Tibial artery (tissue), 4 donors: ENCODE measurements at regions of chr15 and their contacts with region 1.

Region 1: GRCh38 chr15:31215490-31216214 is 111.0 kb upstream of the KLF13 start:
- DNase-seq: peak; percentile 77 to 93
- H3K4me3 ChIP-seq: peak overlapping the region; percentile 52 to 62
- H3K27ac ChIP-seq: peak overlapping the region; percentile 80 to 91
- H3K4me1 ChIP-seq: peaks cover 0 to 27% (median 21%) of the 10 kb centered on the region in 4 donors
- H3K27me3 ChIP-seq: no peaks in the 10 kb centered on the region
- CTCF ChIP-seq: peak; percentile 73 to 84

Region 2: DNA sequence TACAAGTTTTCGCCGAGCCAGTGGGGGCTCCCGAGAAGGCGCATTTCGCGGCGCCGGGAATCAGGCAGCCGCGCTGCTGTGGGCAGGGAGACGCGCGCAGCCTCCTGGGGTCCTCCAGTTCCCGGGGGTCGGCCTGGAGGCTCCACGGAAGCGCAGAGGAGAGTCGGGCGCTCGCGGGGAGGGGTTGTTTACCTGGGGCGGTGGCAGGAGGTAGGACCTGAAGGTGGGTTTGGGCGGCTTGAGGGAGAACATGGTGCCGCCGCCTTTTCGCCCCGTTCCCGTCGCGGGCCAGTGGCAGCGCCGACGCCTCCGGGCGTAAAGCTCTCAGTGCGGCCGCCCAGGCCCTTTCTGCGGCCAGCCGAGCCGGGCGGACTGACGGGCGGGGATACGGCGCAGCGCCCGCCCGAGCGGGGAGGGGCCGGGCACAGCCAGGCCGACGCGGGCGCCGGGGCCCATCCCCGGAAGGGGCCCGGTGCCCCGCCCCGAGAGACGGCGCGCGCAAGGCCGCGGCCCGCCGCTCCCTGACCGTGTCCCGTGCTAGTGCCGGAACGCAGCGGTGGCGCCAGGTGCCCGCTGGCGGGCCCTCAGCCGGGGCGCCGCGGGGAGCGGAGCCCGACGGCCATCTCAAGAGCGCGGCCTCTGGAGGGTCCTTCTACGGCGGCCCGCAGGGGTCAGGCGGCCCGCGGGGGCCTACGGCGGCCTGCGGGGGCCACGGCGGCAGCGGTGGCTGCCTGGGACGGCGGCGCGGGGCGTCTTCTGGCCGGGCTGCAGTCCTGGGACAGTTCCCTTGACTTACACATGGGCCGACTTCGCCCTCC is 224.2 kb before region 1 on chr15 and contains the start of gene MTMR10:
- intact Hi-C with region 1: loop called (anchors 10 kb)
- DNase-seq: peak; percentile 47 to 85
- H3K4me3 ChIP-seq: peak within 1 kb of the TSS; percentile 100
- H3K27ac ChIP-seq: peak within 1 kb of the TSS; percentile 97
- H3K4me1 ChIP-seq: peaks cover 0 to 28% (median 16%) of the 10 kb centered on the region in 4 donors
- H3K27me3 ChIP-seq: no peaks in the 10 kb centered on the region
- CTCF ChIP-seq: no peak

Region 3: GRCh38 chr15:31236184-31237042 is 20.8 kb after region 1 on chr15:
- intact Hi-C with region 1: loop called (anchors 2 kb)
- DNase-seq: peak; percentile 78 to 90
- H3K4me3 ChIP-seq: peak overlapping the region; percentile 27 to 32
- H3K27ac ChIP-seq: peak overlapping the region; percentile 69 to 79
- H3K4me1 ChIP-seq: peaks cover 2 to 19% (median 18%) of the 10 kb centered on the region in 4 donors
- H3K27me3 ChIP-seq: no peaks in the 10 kb centered on the region
- CTCF ChIP-seq: peak in 1 of 2 experiments; percentile 25

Region 4: DNA sequence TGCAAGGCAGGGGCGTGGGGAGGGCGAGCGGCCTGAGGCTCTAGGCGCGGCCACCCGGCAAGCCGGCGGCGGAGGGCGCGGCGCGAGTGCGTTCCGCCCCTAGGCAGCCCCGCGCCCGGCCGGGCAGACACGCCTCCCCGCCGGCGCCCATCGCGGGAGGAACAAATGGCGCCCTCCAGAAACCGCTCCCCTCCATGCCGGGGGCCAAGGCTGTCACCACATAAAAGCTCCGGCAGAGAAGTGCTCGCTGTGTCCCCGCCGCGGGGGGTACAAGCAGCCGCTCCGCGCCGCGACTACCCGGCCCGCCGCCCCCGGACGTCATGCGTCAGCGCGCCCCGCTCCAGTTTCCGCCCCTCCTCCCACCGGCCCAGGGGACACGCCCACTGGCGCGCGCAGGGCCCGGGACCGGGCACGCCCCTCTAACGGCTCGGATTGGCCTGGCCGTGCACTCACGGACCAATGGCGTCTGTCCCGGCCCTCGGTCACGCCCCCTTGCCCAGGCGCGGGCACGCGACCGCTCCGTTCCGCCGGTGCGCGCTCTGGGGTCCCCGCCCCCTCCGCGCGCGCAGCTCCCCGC is 110.6 kb after region 1 on chr15:
- intact Hi-C with region 1: loop called (anchors 5 kb)
- DNase-seq: peak; percentile 96 to 99
- H3K4me3 ChIP-seq: peak overlapping the region; percentile 66 to 89
- H3K27ac ChIP-seq: peak overlapping the region; percentile 91 to 98
- H3K4me1 ChIP-seq: peaks cover 0 to 37% (median 24%) of the 10 kb centered on the region in 4 donors
- H3K27me3 ChIP-seq: no peaks in the 10 kb centered on the region
- CTCF ChIP-seq: no peak

Region 5: GRCh38 chr15:31488426-31489204 is 273.0 kb after region 1 on chr15:
- intact Hi-C with region 1: loop called (anchors 5 kb)
- DNase-seq: peak; percentile 58 to 91
- H3K4me3 ChIP-seq: no peak overlapping the region
- H3K27ac ChIP-seq: peak overlapping the region; percentile 61 to 72
- H3K4me1 ChIP-seq: peaks cover 0 to 27% (median 24%) of the 10 kb centered on the region in 4 donors
- H3K27me3 ChIP-seq: no peaks in the 10 kb centered on the region
- CTCF ChIP-seq: peak; percentile 91 to 94